ENCODE measurements at regions of chr7 and their contacts with region 1.

Region 1: DNA sequence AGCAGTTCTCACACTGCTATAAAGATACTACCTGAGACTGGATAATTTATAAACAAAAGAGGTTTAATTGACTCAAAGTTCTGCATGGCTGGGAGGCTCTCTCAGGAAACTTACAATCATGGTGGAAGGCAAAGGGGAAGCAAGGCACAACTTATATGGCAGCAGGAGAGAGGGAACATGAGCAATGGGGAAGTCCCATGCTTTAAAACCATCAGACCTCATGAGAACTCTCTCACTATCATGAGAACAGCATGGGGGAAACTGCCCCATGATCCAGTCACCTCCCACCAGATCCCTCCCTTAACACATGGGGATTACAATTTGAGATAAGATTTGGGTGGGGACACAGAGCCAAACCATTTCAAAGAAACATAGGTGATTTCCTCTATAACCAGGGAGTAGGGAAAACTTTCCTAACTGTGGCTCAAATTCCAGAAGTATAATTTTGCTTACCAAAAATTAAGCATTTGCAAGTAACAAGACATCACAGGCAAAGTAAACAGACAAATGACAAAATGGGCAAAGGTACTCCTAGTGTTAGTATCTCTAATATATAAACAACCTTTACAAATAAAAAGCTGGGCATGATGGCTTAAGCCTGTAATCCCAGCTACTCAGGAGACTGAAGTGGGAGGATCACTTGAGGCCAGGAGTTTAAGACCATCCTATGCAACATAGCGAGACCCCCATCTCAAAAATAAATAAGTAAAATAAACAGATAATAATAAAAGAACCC is 88.0 kb downstream of the KBTBD2 start:
- DNase-seq: no peak
- ATAC-seq: no peak
- H3K4me3 ChIP-seq: no peak overlapping the region
- H3K27ac ChIP-seq: no peak overlapping the region
- H3K4me1 ChIP-seq: peaks cover 0 to 3% (median 0%) of the 10 kb centered on the region in 9 donors
- H3K27me3 ChIP-seq: no peaks in the 10 kb centered on the region
- CTCF ChIP-seq: no peak

Region 2: GRCh38 chr7:32858648-32859047 is 55.1 kb after region 1 on chr7:
- intact Hi-C with region 1: loop called in 1 of 10 experiments (anchors 10 kb)
- DNase-seq: no peak
- ATAC-seq: no peak
- H3K4me3 ChIP-seq: no peak overlapping the region
- H3K27ac ChIP-seq: no peak overlapping the region
- H3K4me1 ChIP-seq: peaks cover 0 to 16% (median 8%) of the 10 kb centered on the region in 9 donors
- H3K27me3 ChIP-seq: no peaks in the 10 kb centered on the region
- CTCF ChIP-seq: no peak

Region 3: DNA sequence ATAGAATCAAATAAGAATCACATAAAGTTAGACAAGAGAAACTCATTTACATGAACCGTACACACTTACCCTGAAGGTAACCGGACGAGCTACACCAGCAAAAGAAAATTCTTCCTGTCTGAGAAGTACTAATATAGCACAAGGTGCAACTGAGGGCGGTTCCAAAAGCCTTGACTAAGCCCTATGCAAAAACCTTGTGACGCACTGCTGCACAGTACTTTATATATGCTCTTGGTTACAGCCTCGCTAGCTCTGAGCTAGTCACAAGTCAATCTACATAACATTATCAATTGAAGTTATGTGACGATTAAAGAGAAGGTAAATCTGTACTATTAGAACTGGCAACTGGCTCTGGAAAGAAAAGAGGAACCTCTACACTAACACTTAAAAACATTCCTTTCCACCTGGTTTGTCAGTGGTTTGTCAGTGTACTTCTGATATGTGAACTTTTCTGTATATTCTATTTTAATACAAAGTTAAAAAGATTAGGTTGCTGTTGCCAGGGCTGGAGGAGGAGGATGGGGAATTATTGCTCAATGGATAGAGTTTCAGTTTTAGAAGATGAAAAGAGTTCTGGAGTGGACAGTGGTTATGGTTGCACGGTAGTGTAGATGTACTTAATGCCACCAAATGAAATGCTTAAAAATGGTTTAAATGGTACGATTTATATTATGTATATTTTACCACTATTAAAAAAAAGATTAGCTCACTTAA is 237.4 kb after region 1 on chr7:
- intact Hi-C with region 1: loop called in 2 of 10 experiments (anchors 10 kb)
- DNase-seq: no peak
- ATAC-seq: peak in 6 of 8 donors; percentile 71 to 84 (median 82)
- H3K4me3 ChIP-seq: peak overlapping the region in 9 of 10 donors; percentile 2 to 67 (median 52)
- H3K27ac ChIP-seq: peak overlapping the region in 8 of 10 donors; percentile 19 to 87 (median 70)
- H3K4me1 ChIP-seq: peaks cover 5 to 72% (median 62%) of the 10 kb centered on the region in 9 donors
- H3K27me3 ChIP-seq: no peaks in the 10 kb centered on the region
- CTCF ChIP-seq: no peak

Measured in heart right ventricle (tissue), 16 donors.